Mammary epithelial cell (primary cell): ENCODE measurements at regions of chr1 and their contacts with region 1.

Region 1: DNA sequence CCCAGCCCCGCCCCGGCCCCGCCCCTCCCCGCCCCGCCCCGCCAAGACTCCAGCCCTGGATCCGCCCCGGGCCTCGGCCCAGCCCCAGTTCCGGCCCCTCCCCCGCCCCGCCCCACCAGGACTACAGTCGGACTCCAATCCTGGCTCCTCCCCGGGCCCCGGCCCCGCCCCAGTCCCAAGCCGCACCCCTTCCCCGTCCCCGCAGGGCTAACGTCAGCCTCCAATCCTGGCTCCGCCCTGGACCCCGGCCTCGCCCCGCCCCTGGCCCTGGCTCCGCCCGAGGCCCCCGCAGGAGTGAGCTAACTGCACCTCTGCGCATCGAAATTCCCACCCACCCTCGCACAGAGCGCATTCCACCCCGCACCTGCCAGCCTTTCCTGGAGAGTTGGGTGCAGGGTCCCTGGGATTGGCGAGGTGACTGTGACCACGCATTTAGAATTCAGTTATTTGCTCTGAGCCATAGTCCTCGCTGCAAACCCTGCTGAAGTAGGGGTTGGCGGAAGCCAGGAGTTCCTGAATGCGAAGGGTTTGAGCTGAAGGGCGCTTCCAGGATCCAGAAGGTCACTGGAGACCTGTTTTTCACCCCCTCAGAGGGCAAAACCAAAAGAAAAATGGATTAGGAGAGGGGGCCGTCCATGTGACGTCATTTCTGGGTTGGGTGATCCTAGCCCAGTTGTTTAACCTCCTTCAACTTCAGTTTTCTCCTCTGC is 588 bp upstream of the IGSF8 start:
- DNase-seq: peak; percentile 80
- H3K4me3 ChIP-seq: peak overlapping the region in 2 of 3 experiments; percentile 30 to 43
- H3K27ac ChIP-seq: no peak overlapping the region
- H3K4me1 ChIP-seq: peaks cover 37% of the 10 kb centered on the region
- H3K27me3 ChIP-seq: no peaks in the 10 kb centered on the region
- CTCF ChIP-seq: no peak

Region 2: GRCh38 chr1:160040476-160040875 is 58.5 kb before region 1 on chr1:
- CTCF ChIA-PET with region 1: no interaction called
- dilution Hi-C with region 1: no loop called
- in situ Hi-C with region 1: no loop called
- intact Hi-C with region 1: no loop called
- DNase-seq: no peak
- H3K4me3 ChIP-seq: no peak overlapping the region
- H3K27ac ChIP-seq: no peak overlapping the region
- H3K4me1 ChIP-seq: no peaks in the 10 kb centered on the region
- H3K27me3 ChIP-seq: no peaks in the 10 kb centered on the region
- CTCF ChIP-seq: no peak

Region 3: DNA sequence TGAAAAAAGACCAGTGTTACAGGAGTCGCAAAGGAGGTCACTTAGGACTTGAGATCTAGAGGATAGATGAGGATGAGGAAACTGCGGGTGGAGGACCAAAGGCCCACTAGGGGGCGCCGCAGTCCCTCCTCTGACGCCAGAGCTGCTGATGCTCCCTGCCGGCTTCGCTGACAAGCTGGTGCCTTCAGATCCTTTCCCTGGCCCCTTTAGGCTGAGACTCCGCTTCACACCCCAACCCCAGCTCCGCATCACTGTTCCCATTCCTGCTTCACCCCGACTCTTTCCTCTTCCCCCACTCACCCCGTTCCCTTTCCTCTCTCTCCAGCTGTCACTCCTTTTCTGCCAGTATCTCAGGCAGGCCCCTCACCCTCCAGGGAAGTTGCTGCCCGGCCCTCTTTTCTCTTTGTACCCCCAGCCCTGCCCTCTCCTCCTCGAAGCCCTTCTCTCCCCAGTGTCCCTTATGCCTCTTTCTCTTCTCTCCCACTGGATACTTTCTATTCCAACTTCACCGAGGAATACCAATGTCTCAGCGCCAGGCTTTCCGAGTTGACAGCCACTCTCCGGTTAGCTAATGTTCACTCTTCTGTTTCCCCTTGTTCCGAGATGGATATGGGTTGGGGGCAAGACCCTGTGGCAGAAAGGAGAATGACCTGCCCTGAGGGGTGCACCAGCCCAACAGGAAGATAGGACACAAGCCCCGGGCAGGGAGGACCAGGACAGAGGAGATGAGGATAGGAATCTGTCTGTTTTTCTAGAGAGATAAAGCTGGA is 13.1 kb before region 1 on chr1:
- CTCF ChIA-PET with region 1: no interaction called
- dilution Hi-C with region 1: no loop called
- in situ Hi-C with region 1: no loop called
- intact Hi-C with region 1: no loop called
- DNase-seq: peak; percentile 30
- H3K4me3 ChIP-seq: no peak overlapping the region
- H3K27ac ChIP-seq: no peak overlapping the region
- H3K4me1 ChIP-seq: peaks cover 8% of the 10 kb centered on the region
- H3K27me3 ChIP-seq: no peaks in the 10 kb centered on the region
- CTCF ChIP-seq: peak; percentile 76 to 86

Region 4: GRCh38 chr1:160161965-160162705 is 63.1 kb after region 1 on chr1:
- CTCF ChIA-PET with region 1: no interaction called
- dilution Hi-C with region 1: no loop called
- in situ Hi-C with region 1: no loop called
- intact Hi-C with region 1: loop called (anchors 1 kb)
- DNase-seq: no peak
- H3K4me3 ChIP-seq: no peak overlapping the region
- H3K27ac ChIP-seq: no peak overlapping the region
- H3K4me1 ChIP-seq: no peaks in the 10 kb centered on the region
- H3K27me3 ChIP-seq: no peaks in the 10 kb centered on the region
- CTCF ChIP-seq: peak; percentile 27 to 48

Region 5: GRCh38 chr1:160219062-160219929 is 120.3 kb after region 1 on chr1:
- CTCF ChIA-PET with region 1: interaction called, 6 read pairs
- dilution Hi-C with region 1: loop called (anchors 10 kb)
- in situ Hi-C with region 1: no loop called
- intact Hi-C with region 1: loop called (anchors 1 kb)
- DNase-seq: peak; percentile 71
- H3K4me3 ChIP-seq: no peak overlapping the region
- H3K27ac ChIP-seq: peak overlapping the region; percentile 63
- H3K4me1 ChIP-seq: peaks cover 47% of the 10 kb centered on the region
- H3K27me3 ChIP-seq: no peaks in the 10 kb centered on the region
- CTCF ChIP-seq: peak; percentile 46 to 66

Region 6: DNA sequence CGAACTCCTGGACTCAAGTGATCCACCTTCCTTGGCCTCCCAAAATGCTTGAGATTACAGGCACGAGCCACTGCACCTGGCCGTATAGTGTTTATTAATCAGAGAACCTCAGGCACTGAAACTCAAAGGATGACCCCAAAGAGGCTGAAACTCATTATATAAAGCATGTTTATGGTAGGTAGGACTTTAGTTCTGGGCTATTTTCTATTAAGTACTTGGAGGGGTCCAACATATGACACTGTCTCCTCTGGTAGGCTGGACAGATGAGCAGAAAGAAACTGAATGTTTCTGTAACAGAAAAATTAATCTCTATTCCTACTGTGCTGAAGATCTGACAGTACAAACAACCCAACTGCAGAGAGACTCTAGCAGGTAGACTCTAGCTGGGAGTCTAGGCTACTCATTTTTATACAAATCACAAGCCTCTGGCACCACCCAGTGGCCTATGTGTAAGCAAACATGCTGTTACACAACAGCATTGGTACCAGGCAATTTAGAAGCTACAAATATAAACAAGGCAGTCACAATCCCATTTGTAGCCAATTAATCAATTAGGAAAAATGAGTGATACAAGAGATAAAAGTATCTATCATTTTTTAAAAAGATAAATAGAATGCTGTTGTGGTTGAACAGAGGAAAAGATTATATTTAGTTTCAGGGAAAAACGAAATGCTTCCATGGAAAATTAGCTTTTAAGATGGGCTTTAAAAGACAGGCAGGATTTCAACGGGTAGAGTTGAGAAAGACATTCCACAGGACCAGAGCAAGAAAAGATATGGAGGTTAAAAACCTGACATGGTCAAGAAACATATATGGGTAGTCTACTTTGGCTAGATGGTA is 152.9 kb after region 1 on chr1:
- CTCF ChIA-PET with region 1: interaction called, 3 read pairs
- dilution Hi-C with region 1: no loop called
- in situ Hi-C with region 1: loop called in 1 of 2 experiments (anchors 10 kb)
- intact Hi-C with region 1: loop called (anchors 1 kb)
- DNase-seq: peak; percentile 50
- H3K4me3 ChIP-seq: no peak overlapping the region
- H3K27ac ChIP-seq: no peak overlapping the region
- H3K4me1 ChIP-seq: peaks cover 8% of the 10 kb centered on the region
- H3K27me3 ChIP-seq: no peaks in the 10 kb centered on the region
- CTCF ChIP-seq: peak; percentile 81 to 83

Region 7: GRCh38 chr1:160376525-160377131 is 277.6 kb after region 1 on chr1:
- CTCF ChIA-PET with region 1: no interaction called
- dilution Hi-C with region 1: no loop called
- in situ Hi-C with region 1: no loop called
- intact Hi-C with region 1: loop called (anchors 1 kb)
- DNase-seq: peak; percentile 46
- H3K4me3 ChIP-seq: no peak overlapping the region
- H3K27ac ChIP-seq: no peak overlapping the region
- H3K4me1 ChIP-seq: peaks cover 3% of the 10 kb centered on the region
- H3K27me3 ChIP-seq: no peaks in the 10 kb centered on the region
- CTCF ChIP-seq: peak; percentile 96 to 97

Region 8: GRCh38 chr1:160416369-160416768 is 317.4 kb after region 1 on chr1:
- CTCF ChIA-PET with region 1: interaction called, 4 read pairs
- dilution Hi-C with region 1: no loop called
- in situ Hi-C with region 1: loop called in 1 of 2 experiments (anchors 25 kb)
- intact Hi-C with region 1: loop called (anchors 2 kb)
- DNase-seq: peak; percentile 56
- H3K4me3 ChIP-seq: no peak overlapping the region
- H3K27ac ChIP-seq: no peak overlapping the region
- H3K4me1 ChIP-seq: peaks cover 15% of the 10 kb centered on the region
- H3K27me3 ChIP-seq: no peaks in the 10 kb centered on the region
- CTCF ChIP-seq: peak; percentile 62 to 84